ENCODE measurements at regions of chr1 and their contacts with region 1.

Region 1: GRCh38 chr1:16009030-16009709 is 5.1 kb downstream of the SRARP start:
- DNase-seq: peak; percentile 71
- CTCF ChIP-seq: peak; percentile 94

Region 2: GRCh38 chr1:15895233-15895632 is 113.9 kb before region 1 on chr1:
- CTCF ChIA-PET with region 1: no interaction called
- POLR2A ChIA-PET with region 1: no interaction called
- DNase-seq: no peak
- CTCF ChIP-seq: no peak

Region 3: DNA sequence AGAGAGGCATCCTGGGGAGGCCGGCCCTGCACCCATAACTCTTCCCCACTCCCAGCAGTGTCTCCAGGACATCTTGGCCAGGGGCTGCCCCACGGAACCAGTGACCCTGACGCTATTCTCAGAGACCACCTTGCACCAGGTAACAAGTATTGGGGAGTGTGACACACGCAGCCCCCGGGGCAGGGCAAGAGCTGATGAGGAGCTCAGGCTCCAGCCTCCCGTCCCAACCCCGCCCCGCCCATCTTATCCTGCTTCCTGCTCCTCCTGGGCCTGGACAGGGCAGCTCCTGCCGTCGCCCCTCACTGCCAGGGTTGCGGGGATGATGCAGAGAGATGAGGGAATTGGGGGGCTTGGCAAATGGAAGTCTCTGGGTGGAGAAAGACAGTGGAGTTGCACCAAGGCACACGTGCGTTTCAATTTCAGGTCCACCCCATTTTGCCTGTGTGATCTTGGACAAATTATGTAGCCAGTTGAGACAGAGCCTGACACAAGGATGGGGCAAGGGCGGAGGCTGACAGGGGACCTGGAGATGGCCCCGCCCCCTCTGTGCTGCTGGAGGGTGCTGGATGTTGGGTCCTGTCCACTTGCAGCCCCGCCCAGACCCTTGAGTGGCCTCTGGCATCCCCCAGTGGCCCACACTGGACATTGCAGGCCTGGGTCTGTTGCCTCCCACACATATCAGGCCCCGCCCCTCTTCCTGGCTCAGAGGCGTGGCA is 23.4 kb after region 1 on chr1:
- CTCF ChIA-PET with region 1: interaction called, 31 read pairs
- POLR2A ChIA-PET with region 1: no interaction called
- DNase-seq: peak; percentile 90
- CTCF ChIP-seq: peak; percentile 96

Region 4: GRCh38 chr1:16043521-16043920 is 34.4 kb after region 1 on chr1 and contains the start of gene CLCNKB:
- CTCF ChIA-PET with region 1: interaction called, 11 read pairs
- POLR2A ChIA-PET with region 1: no interaction called
- DNase-seq: no peak
- CTCF ChIP-seq: no peak

Region 5: GRCh38 chr1:16055613-16056520 is 46.7 kb after region 1 on chr1:
- CTCF ChIA-PET with region 1: interaction called, 40 read pairs
- POLR2A ChIA-PET with region 1: no interaction called
- DNase-seq: peak; percentile 93
- CTCF ChIP-seq: peak; percentile 98